A673 (cell line): ENCODE measurements at regions of chr3 and their contacts with region 1.

Region 1: GRCh38 chr3:189502676-189503257 is 128.4 kb upstream of the TP63 start:
- DNase-seq: no peak
- H3K4me3 ChIP-seq: no peak overlapping the region
- H3K27ac ChIP-seq: peak overlapping the region; percentile 99
- H3K4me1 ChIP-seq: peaks cover 51% of the 10 kb centered on the region
- H3K27me3 ChIP-seq: no peaks in the 10 kb centered on the region
- CTCF ChIP-seq: no peak

Region 2: GRCh38 chr3:189355481-189356201 is 147.1 kb before region 1 on chr3:
- CTCF ChIA-PET with region 1: no interaction called
- POLR2A ChIA-PET with region 1: no interaction called
- intact Hi-C with region 1: no loop called
- DNase-seq: no peak
- H3K4me3 ChIP-seq: no peak overlapping the region
- H3K27ac ChIP-seq: peak overlapping the region; percentile 11
- H3K4me1 ChIP-seq: peaks cover 16% of the 10 kb centered on the region
- H3K27me3 ChIP-seq: no peaks in the 10 kb centered on the region
- CTCF ChIP-seq: no peak

Region 3: DNA sequence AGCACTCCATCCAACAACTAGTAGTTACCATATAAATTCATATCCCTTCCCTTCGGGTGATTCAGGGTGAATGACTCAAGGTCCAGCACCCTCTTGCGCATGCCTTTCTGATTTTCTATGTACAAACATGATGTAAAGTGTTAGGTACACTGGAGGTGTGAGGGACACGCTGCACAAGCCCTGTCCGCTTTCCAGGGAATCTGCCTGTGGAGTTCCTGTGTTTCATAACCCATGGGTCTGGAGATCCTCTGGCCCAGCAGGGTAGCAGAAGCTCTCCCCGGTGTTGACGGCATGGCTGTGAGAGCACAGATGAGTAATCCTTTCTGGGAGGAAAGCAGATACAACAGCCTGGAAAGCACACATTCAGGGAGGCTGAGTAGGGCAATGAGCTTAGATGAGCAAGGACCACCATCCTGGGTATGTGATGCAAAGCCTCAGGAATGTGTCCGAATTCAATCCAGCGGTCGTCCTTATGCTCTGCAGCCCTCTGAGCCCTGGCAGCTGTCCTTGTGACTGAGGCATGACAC is 14.5 kb before region 1 on chr3:
- CTCF ChIA-PET with region 1: no interaction called
- POLR2A ChIA-PET with region 1: no interaction called
- intact Hi-C with region 1: no loop called
- DNase-seq: peak; percentile 64
- H3K4me3 ChIP-seq: no peak overlapping the region
- H3K27ac ChIP-seq: peak overlapping the region; percentile 44
- H3K4me1 ChIP-seq: peaks cover 16% of the 10 kb centered on the region
- H3K27me3 ChIP-seq: no peaks in the 10 kb centered on the region
- CTCF ChIP-seq: no peak

Region 4: GRCh38 chr3:189673535-189673934 is 170.8 kb after region 1 on chr3:
- CTCF ChIA-PET with region 1: no interaction called
- POLR2A ChIA-PET with region 1: no interaction called
- intact Hi-C with region 1: loop called (anchors 1 kb)
- DNase-seq: no peak
- H3K4me3 ChIP-seq: no peak overlapping the region
- H3K27ac ChIP-seq: no peak overlapping the region
- H3K4me1 ChIP-seq: peaks cover 3% of the 10 kb centered on the region
- H3K27me3 ChIP-seq: no peaks in the 10 kb centered on the region
- CTCF ChIP-seq: no peak

Region 5: DNA sequence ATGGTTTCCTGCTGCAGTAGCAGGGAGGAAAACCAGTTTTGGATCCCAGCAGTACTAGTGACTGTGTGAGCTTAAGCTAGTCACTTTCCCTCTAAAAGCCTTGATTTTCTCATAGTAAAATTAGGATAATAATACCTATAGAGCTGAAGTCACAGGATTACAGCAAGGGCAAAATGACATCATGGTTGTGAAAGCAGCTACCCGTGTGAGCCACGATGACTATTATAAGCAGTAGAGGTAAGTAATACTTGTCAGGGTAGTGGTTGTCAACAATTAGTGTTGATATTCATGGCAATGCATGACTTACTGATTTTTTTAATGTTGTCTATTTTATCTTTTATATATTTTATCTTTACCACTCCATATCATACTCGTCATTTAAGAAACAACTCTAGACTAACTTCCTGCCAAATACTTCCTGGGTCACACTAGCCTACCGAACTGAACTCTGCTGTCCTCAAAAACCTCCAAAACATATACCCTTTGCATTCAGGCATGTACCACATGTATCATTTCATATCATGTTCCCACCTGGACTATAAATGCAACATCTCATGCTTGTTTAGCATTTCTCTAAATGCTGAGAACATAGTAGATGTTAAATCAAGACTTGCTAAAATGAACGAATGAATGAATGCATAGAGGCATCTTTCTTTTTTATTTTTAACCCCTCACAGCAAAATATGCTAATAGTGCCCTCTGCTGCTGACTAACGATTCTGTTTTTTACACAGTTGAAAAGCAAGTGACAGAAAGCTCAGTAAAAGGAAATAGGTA is 445.4 kb after region 1 on chr3:
- CTCF ChIA-PET with region 1: interaction called, 7 read pairs
- POLR2A ChIA-PET with region 1: no interaction called
- intact Hi-C with region 1: loop called (anchors 1 kb)
- DNase-seq: peak; percentile 79
- H3K4me3 ChIP-seq: no peak overlapping the region
- H3K27ac ChIP-seq: peak overlapping the region; percentile 61
- H3K4me1 ChIP-seq: peaks cover 21% of the 10 kb centered on the region
- H3K27me3 ChIP-seq: no peaks in the 10 kb centered on the region
- CTCF ChIP-seq: peak; percentile 80

Region 6: GRCh38 chr3:190384241-190384863 is 881.6 kb after region 1 on chr3:
- CTCF ChIA-PET with region 1: no interaction called
- POLR2A ChIA-PET with region 1: no interaction called
- intact Hi-C with region 1: loop called (anchors 5 kb)
- DNase-seq: peak; percentile 88
- H3K4me3 ChIP-seq: no peak overlapping the region
- H3K27ac ChIP-seq: peak overlapping the region; percentile 36
- H3K4me1 ChIP-seq: peaks cover 81% of the 10 kb centered on the region
- H3K27me3 ChIP-seq: no peaks in the 10 kb centered on the region
- CTCF ChIP-seq: peak; percentile 80